HEK293 (cell line): ENCODE measurements at regions of chr12 and their contacts with region 1.

Region 1: DNA sequence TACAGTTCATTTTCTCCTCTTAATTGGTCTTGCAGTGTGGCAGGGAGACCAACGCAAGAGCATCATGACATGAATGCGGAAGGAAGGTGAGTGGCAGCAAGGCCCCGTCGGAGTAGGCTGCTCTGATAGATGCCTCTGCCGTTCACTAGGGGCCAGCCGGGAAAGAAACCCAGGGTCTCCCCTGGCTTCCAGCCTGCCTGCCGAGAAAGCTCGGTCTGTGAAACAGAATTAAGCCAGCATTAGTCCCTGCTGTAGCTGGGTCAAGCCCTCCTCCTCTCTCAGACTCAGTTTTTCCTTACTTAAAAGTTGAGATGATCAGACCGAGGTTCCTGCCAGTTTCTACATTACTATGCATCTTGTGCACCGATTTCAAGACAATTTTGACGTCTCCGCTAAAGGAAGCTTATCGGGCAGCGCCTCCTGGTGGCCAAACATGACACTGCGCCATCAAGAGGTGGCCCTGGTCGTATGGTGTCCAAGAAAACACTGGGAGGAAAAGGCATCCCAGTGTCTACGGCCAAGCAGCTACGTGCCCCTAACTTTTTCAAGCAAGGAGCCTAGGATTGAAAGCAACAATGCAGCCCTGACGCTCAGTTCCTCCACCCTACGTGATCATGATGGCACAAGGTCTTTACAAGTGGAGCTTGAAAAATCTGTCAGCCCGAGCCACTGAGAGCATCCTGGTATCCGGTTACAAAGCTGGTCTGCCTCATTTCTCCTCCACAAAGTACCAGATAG is 131.6 kb downstream of the KSR2 start:
- H3K4me3 ChIP-seq: no peak overlapping the region
- H3K27ac ChIP-seq: no peak overlapping the region
- H3K4me1 ChIP-seq: no peaks in the 10 kb centered on the region
- CTCF ChIP-seq: peak; percentile 86

Region 2: DNA sequence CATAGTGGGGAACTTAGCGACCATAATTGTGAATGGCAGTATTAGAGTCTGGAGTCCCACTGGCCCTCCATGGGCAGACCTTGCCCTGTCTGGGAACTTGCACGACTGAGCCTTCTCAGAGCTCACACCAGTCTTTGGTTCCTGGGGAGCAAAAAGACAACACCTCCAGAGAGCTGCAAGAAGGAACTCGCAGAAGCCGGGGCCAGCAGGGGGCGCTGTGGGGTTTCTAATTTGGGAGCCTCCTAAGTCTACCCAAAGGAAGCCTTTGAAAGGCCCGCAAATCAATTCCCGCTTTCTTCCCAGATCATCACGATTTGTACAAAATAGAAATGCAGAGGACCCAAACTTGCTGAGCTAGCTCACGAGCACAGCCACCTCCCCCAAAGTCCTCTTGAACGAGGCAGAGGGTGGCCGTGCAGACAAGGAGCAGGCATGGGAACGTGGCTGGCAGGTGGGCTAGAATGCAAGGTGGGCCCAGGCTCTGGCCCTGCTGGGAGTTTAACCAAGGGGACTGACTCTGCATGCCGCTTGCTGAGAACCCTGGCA is 600.6 kb before region 1 on chr12:
- CTCF ChIA-PET with region 1: interaction called, 75 read pairs
- POLR2A ChIA-PET with region 1: interaction called, 5 read pairs
- H3K4me3 ChIP-seq: no peak overlapping the region
- H3K27ac ChIP-seq: no peak overlapping the region
- H3K4me1 ChIP-seq: no peaks in the 10 kb centered on the region
- CTCF ChIP-seq: peak; percentile 31; the same call in 1 of the 2 replicates

Region 3: GRCh38 chr12:117587631-117588287 is 249.4 kb before region 1 on chr12:
- CTCF ChIA-PET with region 1: interaction called, 28 read pairs
- POLR2A ChIA-PET with region 1: no interaction called
- H3K4me3 ChIP-seq: no peak overlapping the region
- H3K27ac ChIP-seq: no peak overlapping the region
- H3K4me1 ChIP-seq: no peaks in the 10 kb centered on the region
- CTCF ChIP-seq: peak; percentile 77

Region 4: GRCh38 chr12:117685110-117685926 is 151.8 kb before region 1 on chr12:
- CTCF ChIA-PET with region 1: interaction called, 15 read pairs
- POLR2A ChIA-PET with region 1: no interaction called
- H3K4me3 ChIP-seq: no peak overlapping the region
- H3K27ac ChIP-seq: peak overlapping the region; percentile 53; the same call in 1 of the 2 replicates
- H3K4me1 ChIP-seq: peaks cover 16% of the 10 kb centered on the region
- CTCF ChIP-seq: no peak

Region 5: GRCh38 chr12:117857632-117858612 is 20.8 kb after region 1 on chr12:
- CTCF ChIA-PET with region 1: interaction called, 59 read pairs
- POLR2A ChIA-PET with region 1: no interaction called
- H3K4me3 ChIP-seq: no peak overlapping the region
- H3K27ac ChIP-seq: no peak overlapping the region
- H3K4me1 ChIP-seq: no peaks in the 10 kb centered on the region
- CTCF ChIP-seq: 0 out of 2 replicates have a peak, but pooled peaks have one; percentile 27

Region 6: DNA sequence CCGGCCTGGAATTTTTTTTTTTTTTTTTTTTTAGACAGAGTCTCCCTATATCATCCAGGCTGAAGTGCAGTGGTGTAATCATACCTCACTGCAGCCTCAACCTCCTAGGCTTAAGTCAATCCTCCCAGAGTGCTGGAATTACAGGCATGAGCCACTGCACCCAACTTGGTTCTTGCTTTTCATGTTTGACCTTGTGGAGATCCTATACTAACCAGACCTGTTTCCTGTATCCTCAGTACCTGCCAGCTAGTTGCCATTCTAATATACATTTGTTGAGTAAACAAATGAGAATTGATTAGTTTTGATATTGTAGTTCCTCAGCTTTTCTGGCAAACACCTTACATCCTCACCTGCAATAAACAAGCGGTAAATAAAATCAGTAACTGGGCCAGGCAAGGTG is 269.9 kb after region 1 on chr12:
- CTCF ChIA-PET with region 1: no interaction called
- POLR2A ChIA-PET with region 1: no interaction called
- H3K4me3 ChIP-seq: no peak overlapping the region
- H3K27ac ChIP-seq: no peak overlapping the region
- H3K4me1 ChIP-seq: peaks cover 5% of the 10 kb centered on the region
- CTCF ChIP-seq: no peak